CD4-positive, alpha-beta T cell (primary cell): ENCODE measurements at regions of chr7 and their contacts with region 1.

Region 1: GRCh38 chr7:7595451-7595850 is 28.8 kb downstream of the MIOS start:
- DNase-seq: peak in 3 of 14 experiments; percentile 56
- ATAC-seq: peak; percentile 58
- H3K4me3 ChIP-seq: no peak overlapping the region
- H3K4me3 Mint-ChIP-seq: no peak overlapping the region
- H3K27ac ChIP-seq: no peak overlapping the region
- H3K27ac Mint-ChIP-seq: no peak overlapping the region
- H3K4me1 ChIP-seq: no peaks in the 10 kb centered on the region
- H3K4me1 Mint-ChIP-seq: no peaks in the 10 kb centered on the region
- H3K27me3 ChIP-seq: no peaks in the 10 kb centered on the region
- H3K27me3 Mint-ChIP-seq: no peaks in the 10 kb centered on the region
- CTCF ChIP-seq: peak; percentile 54

Region 2: GRCh38 chr7:7653593-7654187 is 58.2 kb after region 1 on chr7:
- CTCF ChIA-PET with region 1: no interaction called
- POLR2A ChIA-PET with region 1: no interaction called
- intact Hi-C with region 1: no loop called
- DNase-seq: peak in 4 of 14 experiments; percentile 23 to 40 (median 28)
- ATAC-seq: no peak
- H3K4me3 ChIP-seq: no peak overlapping the region
- H3K4me3 Mint-ChIP-seq: no peak overlapping the region
- H3K27ac ChIP-seq: no peak overlapping the region
- H3K27ac Mint-ChIP-seq: no peak overlapping the region
- H3K4me1 ChIP-seq: no peaks in the 10 kb centered on the region
- H3K4me1 Mint-ChIP-seq: peaks cover 76% of the 10 kb centered on the region
- H3K27me3 ChIP-seq: no peaks in the 10 kb centered on the region
- H3K27me3 Mint-ChIP-seq: no peaks in the 10 kb centered on the region
- CTCF ChIP-seq: peak; percentile 49

Region 3: GRCh38 chr7:8290645-8291314 is 695.3 kb after region 1 on chr7:
- CTCF ChIA-PET with region 1: no interaction called
- POLR2A ChIA-PET with region 1: no interaction called
- intact Hi-C with region 1: loop called in 1 of 2 experiments (anchors 5 kb)
- DNase-seq: no peak
- ATAC-seq: no peak
- H3K4me3 ChIP-seq: no peak overlapping the region
- H3K4me3 Mint-ChIP-seq: no peak overlapping the region
- H3K27ac ChIP-seq: no peak overlapping the region
- H3K27ac Mint-ChIP-seq: no peak overlapping the region
- H3K4me1 ChIP-seq: no peaks in the 10 kb centered on the region
- H3K4me1 Mint-ChIP-seq: no peaks in the 10 kb centered on the region
- H3K27me3 ChIP-seq: peaks cover 5 to 6% of the 10 kb centered on the region in 2 experiments
- H3K27me3 Mint-ChIP-seq: peaks cover 11% of the 10 kb centered on the region
- CTCF ChIP-seq: no peak

Region 4: GRCh38 chr7:8295638-8296361 is 700.3 kb after region 1 on chr7:
- CTCF ChIA-PET with region 1: no interaction called
- POLR2A ChIA-PET with region 1: no interaction called
- intact Hi-C with region 1: loop called (anchors 1 to 5 kb)
- DNase-seq: peak in 8 of 14 experiments; percentile 3 to 81 (median 18)
- ATAC-seq: peak; percentile 84
- H3K4me3 ChIP-seq: no peak overlapping the region
- H3K4me3 Mint-ChIP-seq: no peak overlapping the region
- H3K27ac ChIP-seq: no peak overlapping the region
- H3K27ac Mint-ChIP-seq: no peak overlapping the region
- H3K4me1 ChIP-seq: no peaks in the 10 kb centered on the region
- H3K4me1 Mint-ChIP-seq: no peaks in the 10 kb centered on the region
- H3K27me3 ChIP-seq: peaks cover 6 to 7% of the 10 kb centered on the region in 2 experiments
- H3K27me3 Mint-ChIP-seq: peaks cover 13% of the 10 kb centered on the region
- CTCF ChIP-seq: peak; percentile 71